Ascending aorta (tissue), 2 donors: ENCODE measurements at regions of chr11 and their contacts with region 1.

Region 1: GRCh38 chr11:3854977-3855807 is at the start of gene STIM1:
- DNase-seq: peak; percentile 80 to 97
- H3K4me3 ChIP-seq: peak within 1 kb of the TSS; percentile 81 to 96
- H3K27ac ChIP-seq: peak within 1 kb of the TSS; percentile 94 to 97
- H3K4me1 ChIP-seq: peaks cover 10 to 29% of the 10 kb centered on the region in 2 donors
- H3K27me3 ChIP-seq: no peaks in the 10 kb centered on the region
- CTCF ChIP-seq: peak; percentile 97 to 99 (median 98)
- total RNA-seq, gene STIM1: 48.1 TPM

Region 2: DNA sequence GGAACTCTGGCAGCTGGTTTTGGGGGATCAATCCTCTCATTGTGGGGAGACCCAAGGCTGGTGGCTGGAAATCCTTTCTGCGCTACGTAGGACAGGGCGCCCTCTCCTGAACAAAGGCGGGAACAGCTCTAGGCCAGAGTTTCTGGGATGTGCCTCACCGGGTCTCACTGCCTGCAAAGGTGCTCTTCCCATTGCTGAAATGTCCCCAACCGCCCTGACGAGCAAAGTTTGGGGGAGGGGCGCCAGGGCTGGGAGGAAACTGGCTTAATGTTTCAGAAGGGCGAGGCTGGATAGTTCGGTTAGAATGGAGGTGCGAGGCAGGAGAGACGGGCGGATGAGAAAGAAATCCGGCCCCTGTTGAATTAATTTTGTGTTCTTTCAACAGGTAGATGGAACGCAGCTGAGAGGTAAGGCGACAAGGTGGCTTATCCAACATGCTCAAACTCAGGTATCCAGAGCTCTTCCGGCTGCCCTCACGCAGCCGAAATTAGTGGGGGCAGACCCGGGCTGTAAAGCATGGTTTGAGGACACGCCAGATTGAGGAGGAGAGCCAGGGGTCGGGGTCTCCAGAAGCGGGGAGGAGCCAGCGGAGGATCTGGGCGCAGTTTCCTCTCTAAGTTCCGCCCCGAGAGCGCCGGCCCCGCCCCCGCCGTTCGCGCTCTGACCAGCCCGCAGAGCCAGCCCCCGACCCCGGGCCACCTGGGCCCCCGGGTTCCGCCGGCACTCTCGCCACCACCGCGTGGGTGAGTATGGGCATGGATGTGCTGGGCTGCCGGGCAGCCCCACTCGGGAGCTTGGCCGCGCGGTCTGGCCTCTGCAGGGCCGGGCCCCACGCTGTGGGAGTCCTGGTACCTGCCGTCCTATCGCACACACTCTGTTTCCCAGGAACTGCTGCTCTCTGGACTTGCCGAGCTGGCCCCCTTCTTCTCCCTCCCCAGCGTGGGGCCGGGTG is 47.0 kb before region 1 on chr11 and contains the start of gene PGAP2:
- intact Hi-C with region 1: no loop called
- DNase-seq: peak in 1 of 2 donors; percentile 76
- H3K4me3 ChIP-seq: peak within 1 kb of the TSS; percentile 63 to 90
- H3K27ac ChIP-seq: peak within 1 kb of the TSS; percentile 27 to 57
- H3K4me1 ChIP-seq: peaks cover 3 to 4% of the 10 kb centered on the region in 2 donors
- H3K27me3 ChIP-seq: no peaks in the 10 kb centered on the region
- CTCF ChIP-seq: peak; percentile 32 to 82 (median 70)
- total RNA-seq, gene PGAP2: 7.1 TPM

Region 3: DNA sequence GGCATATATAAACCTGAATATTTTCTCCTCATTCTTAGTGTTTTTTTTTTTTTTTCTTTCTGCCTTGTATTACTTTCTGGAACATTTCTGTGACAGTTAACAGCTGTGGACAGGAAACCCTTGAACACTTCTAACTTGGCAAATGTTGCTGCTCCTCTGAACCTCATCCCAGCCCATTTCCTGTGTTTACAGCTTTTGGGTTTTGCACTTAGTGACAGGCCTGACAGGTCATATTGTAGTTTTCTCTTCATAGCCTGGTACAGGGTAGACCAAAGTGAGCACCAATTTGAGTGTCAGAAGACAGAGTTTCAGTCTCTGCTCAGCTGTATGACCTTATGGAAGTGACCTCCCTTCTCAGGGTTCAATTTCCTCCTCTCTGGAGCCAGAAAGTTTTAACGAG is 91.9 kb after region 1 on chr11:
- intact Hi-C with region 1: loop called (anchors 2 kb)
- DNase-seq: peak in 1 of 2 donors; percentile 67
- H3K4me3 ChIP-seq: no peak overlapping the region
- H3K27ac ChIP-seq: peak overlapping the region; percentile 85 to 88
- H3K4me1 ChIP-seq: peaks cover 51 to 79% of the 10 kb centered on the region in 2 donors
- H3K27me3 ChIP-seq: no peaks in the 10 kb centered on the region
- CTCF ChIP-seq: no peak

Region 4: GRCh38 chr11:4072668-4073285 is 217.6 kb after region 1 on chr11:
- intact Hi-C with region 1: loop called (anchors 1 kb)
- DNase-seq: peak in 1 of 2 donors; percentile 74
- H3K4me3 ChIP-seq: no peak overlapping the region
- H3K27ac ChIP-seq: no peak overlapping the region
- H3K4me1 ChIP-seq: no peaks in the 10 kb centered on the region
- H3K27me3 ChIP-seq: no peaks in the 10 kb centered on the region
- CTCF ChIP-seq: peak; percentile 64 to 85 (median 78)

Region 5: GRCh38 chr11:4084406-4085125 is 229.4 kb after region 1 on chr11:
- intact Hi-C with region 1: no loop called
- DNase-seq: no peak
- H3K4me3 ChIP-seq: no peak overlapping the region
- H3K27ac ChIP-seq: no peak overlapping the region
- H3K4me1 ChIP-seq: no peaks in the 10 kb centered on the region
- H3K27me3 ChIP-seq: no peaks in the 10 kb centered on the region
- CTCF ChIP-seq: no peak

Region 6: DNA sequence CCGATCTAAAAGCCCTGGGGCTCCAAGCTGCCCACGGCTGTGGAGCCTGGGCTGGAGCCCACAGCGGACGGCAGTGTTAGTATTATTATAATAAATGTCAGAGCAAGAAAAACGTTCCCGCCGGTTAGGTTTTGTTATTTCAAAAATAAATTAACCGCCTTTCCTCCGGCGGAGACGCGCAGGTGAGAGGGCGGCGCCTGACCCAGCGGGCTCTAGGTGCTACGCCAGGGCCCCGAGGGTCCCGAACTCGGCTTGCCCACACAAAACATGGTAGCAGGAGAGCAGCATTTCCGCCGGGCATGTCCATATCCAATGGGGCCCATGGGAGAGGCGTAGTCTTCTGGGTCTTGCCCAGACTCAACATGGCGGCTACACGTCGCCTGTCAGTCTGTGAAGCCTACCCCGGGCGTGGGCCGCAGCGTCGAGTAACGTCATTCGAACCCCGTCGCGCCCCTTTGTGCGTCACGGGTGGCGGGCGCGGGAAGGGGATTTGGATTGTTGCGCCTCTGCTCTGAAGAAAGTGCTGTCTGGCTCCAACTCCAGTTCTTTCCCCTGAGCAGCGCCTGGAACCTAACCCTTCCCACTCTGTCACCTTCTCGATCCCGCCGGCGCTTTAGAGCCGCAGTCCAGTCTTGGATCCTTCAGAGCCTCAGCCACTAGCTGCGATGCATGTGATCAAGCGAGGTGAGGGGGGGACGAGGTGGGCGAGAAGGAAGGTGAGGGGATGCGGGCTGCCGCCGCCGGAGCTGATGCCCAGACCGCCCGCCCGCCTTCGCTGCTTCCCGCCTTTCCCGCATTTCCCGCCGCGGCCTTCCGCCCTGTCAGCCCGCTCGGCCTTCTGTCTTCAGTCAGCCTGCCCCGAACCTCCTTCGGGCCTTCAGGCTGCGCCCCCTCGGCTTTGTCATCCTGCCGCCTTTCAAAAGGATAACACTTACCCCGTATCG is 239.4 kb after region 1 on chr11 and contains the start of gene RRM1:
- intact Hi-C with region 1: loop called (anchors 1 kb)
- DNase-seq: peak; percentile 75 to 97
- H3K4me3 ChIP-seq: peak within 1 kb of the TSS; percentile 70 to 82
- H3K27ac ChIP-seq: peak within 1 kb of the TSS; percentile 92 to 94
- H3K4me1 ChIP-seq: peaks cover 9 to 11% of the 10 kb centered on the region in 2 donors
- H3K27me3 ChIP-seq: no peaks in the 10 kb centered on the region
- CTCF ChIP-seq: no peak
- total RNA-seq, gene RRM1: 114 TPM